IMR-90 (cell line): ENCODE measurements at regions of chr10 and their contacts with region 1.

Region 1: DNA sequence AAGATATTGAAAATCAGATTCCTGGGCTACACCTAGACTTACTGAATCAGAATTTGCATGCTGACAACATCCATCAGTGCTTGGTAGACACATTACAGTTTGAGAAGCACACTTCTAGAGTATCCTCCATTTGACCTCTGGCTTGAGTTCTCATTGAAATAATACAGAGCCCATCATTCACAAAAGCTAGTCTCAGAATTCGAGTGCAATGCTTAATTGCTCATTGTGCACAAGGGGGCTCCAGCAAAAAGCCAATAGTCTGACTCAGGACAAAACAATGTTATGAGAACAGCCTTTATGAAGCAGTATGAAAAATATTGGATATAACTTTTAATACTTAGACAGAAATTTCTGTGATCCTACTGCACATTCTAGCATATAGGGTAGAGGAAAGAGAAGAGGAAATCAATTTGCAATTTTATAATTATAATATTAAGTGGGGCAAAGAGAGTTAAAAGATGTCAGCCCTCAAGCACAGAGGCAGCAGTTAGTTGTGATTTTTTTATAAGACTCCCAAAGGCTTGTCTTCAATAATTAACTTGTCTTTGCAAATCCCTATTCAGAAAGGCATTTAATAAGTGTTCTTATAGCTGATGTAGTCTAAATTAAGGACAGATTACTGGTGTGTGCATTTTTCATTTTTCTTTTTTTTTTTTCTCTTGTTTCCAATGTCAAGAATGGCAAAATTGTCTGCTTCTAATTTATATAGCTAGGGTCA is 105.8 kb upstream of the ANK3 start:
- DNase-seq: peak; percentile 28
- ATAC-seq: no peak
- H3K4me3 ChIP-seq: no peak overlapping the region
- H3K27ac ChIP-seq: no peak overlapping the region
- H3K4me1 ChIP-seq: no peaks in the 10 kb centered on the region
- H3K27me3 ChIP-seq: no peaks in the 10 kb centered on the region; the same call in 1 of the 2 replicates
- CTCF ChIP-seq: no peak
- POLR2A ChIP-seq: no peak
- RAD21 ChIP-seq: no peak

Region 2: DNA sequence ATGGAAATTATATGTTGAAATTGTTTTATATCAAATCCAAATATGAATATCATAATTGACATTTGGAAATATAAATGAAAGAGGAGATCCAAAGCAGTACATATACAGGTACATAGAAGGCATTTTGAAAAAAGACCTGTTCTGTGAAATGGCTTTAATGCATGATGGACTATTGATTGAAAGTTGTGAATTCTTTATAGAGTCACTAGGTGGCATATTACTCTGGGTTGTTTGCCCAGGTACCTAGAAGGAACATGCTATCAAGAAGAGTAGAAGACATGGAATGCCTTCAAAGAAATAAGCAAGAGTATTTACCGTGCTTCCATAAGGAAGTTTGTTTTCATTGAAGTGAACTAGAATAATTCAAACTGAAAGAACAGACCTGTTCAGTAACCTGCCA is 54.2 kb after region 1 on chr10:
- CTCF ChIA-PET with region 1: no interaction called
- POLR2A ChIA-PET with region 1: no interaction called
- dilution Hi-C with region 1: loop called (anchors 10 kb)
- in situ Hi-C with region 1: no loop called
- intact Hi-C with region 1: no loop called
- DNase-seq: no peak
- ATAC-seq: no peak
- H3K4me3 ChIP-seq: no peak overlapping the region
- H3K27ac ChIP-seq: no peak overlapping the region
- H3K4me1 ChIP-seq: no peaks in the 10 kb centered on the region
- H3K27me3 ChIP-seq: no peaks in the 10 kb centered on the region
- CTCF ChIP-seq: 0 out of 2 replicates have a peak, but pooled peaks have one; percentile 10
- POLR2A ChIP-seq: no peak
- RAD21 ChIP-seq: no peak